ENCODE measurements at regions of chr7 and their contacts with region 1.

Region 1: GRCh38 chr7:134140889-134141867 is 14.0 kb downstream of the LRGUK start:
- DNase-seq: peak; percentile 72
- ATAC-seq: peak; percentile 97
- H3K4me3 ChIP-seq: no peak overlapping the region
- H3K27ac ChIP-seq: no peak overlapping the region
- H3K4me1 ChIP-seq: no peaks in the 10 kb centered on the region
- H3K27me3 ChIP-seq: no peaks in the 10 kb centered on the region
- CTCF ChIP-seq: peak; percentile 90

Region 2: DNA sequence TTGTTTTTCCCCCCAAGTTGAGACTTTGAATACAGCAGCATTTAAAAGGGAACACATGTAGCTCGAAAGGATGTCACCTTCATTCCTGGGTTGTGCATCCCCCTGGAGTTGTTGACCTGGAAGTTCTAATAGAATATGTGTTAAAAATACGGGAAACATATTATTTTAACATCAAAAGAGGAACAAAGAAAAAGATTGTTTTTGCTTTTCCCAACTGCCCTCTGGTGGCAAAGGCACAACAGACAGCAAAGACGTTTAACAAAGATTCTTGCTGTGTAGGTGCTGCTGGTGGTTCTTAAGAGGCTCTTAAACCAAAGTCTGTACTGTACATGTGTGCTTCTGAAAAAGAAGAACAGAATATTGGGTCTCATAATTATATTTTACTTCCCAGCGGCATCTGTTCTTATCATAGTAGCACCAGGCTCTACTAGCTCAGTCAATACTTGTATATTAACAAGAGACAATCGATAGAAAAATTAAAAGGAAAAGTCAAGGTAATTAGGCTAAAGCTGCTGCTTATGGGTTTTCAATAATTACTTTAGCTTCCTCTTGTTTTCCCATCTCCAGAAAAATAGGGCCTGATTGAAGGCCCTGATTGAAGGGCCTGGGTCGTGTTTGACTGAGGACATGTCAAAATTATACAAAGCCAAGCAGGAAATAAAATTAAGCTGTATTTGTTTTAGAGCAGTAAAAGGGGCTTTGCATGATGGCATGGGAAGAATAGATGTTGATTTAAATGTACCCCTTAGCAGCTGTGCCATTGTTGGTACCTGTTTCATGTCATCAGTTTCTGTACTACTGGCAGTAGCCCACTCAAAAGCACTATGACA is 398.3 kb before region 1 on chr7:
- CTCF ChIA-PET with region 1: no interaction called
- POLR2A ChIA-PET with region 1: no interaction called
- intact Hi-C with region 1: loop called (anchors 10 kb)
- DNase-seq: peak; percentile 42
- ATAC-seq: peak; percentile 44; the same call in 1 of the 2 replicates
- H3K4me3 ChIP-seq: no peak overlapping the region
- H3K27ac ChIP-seq: no peak overlapping the region
- H3K4me1 ChIP-seq: peaks cover 5% of the 10 kb centered on the region; the same call in 1 of the 2 replicates
- H3K27me3 ChIP-seq: no peaks in the 10 kb centered on the region
- CTCF ChIP-seq: peak; percentile 77

Region 3: GRCh38 chr7:134022286-134022911 is 118.8 kb before region 1 on chr7:
- CTCF ChIA-PET with region 1: interaction called, 10 read pairs
- POLR2A ChIA-PET with region 1: no interaction called
- intact Hi-C with region 1: loop called (anchors 2 kb)
- DNase-seq: peak; percentile 27
- ATAC-seq: peak; percentile 99
- H3K4me3 ChIP-seq: no peak overlapping the region
- H3K27ac ChIP-seq: no peak overlapping the region
- H3K4me1 ChIP-seq: no peaks in the 10 kb centered on the region
- H3K27me3 ChIP-seq: no peaks in the 10 kb centered on the region
- CTCF ChIP-seq: no peak

Region 4: DNA sequence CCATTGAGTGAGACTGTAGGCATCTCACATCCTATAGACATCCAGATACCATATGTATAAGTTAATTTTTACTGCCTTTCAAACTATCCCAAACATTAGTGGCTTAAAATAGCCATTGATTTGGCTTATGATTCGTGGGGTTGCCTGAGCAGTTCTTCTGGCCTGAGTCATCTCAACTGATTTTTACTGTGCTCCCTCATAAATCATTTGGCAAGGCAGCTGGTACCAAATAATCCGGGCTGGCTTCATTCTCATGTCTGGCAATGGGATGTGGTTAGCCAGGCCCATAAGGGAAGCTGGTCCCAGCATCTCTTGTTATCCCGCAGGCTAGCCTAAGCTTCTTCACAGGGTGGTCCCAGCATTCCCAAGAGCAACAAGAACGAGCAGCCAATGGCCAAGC is 20.8 kb before region 1 on chr7:
- CTCF ChIA-PET with region 1: no interaction called
- POLR2A ChIA-PET with region 1: no interaction called
- intact Hi-C with region 1: no loop called
- DNase-seq: no peak
- ATAC-seq: no peak
- H3K4me3 ChIP-seq: no peak overlapping the region
- H3K27ac ChIP-seq: no peak overlapping the region
- H3K4me1 ChIP-seq: no peaks in the 10 kb centered on the region
- H3K27me3 ChIP-seq: 0 out of 2 replicates have a peak, but pooled peaks cover 11% of the 10 kb centered on the region
- CTCF ChIP-seq: no peak

Region 5: GRCh38 chr7:134165252-134165651 is 24.1 kb after region 1 on chr7:
- CTCF ChIA-PET with region 1: interaction called, 15 read pairs
- POLR2A ChIA-PET with region 1: no interaction called
- intact Hi-C with region 1: no loop called
- DNase-seq: no peak
- ATAC-seq: no peak
- H3K4me3 ChIP-seq: no peak overlapping the region
- H3K27ac ChIP-seq: no peak overlapping the region
- H3K4me1 ChIP-seq: no peaks in the 10 kb centered on the region
- H3K27me3 ChIP-seq: no peaks in the 10 kb centered on the region
- CTCF ChIP-seq: no peak

Region 6: GRCh38 chr7:134420424-134421125 is 279.4 kb after region 1 on chr7:
- CTCF ChIA-PET with region 1: interaction called, 20 read pairs
- POLR2A ChIA-PET with region 1: no interaction called
- intact Hi-C with region 1: loop called (anchors 1 kb)
- DNase-seq: peak; percentile 79
- ATAC-seq: peak; percentile 84
- H3K4me3 ChIP-seq: no peak overlapping the region
- H3K27ac ChIP-seq: peak overlapping the region; percentile 18; the same call in 1 of the 2 replicates
- H3K4me1 ChIP-seq: peaks cover 32% of the 10 kb centered on the region
- H3K27me3 ChIP-seq: no peaks in the 10 kb centered on the region
- CTCF ChIP-seq: peak; percentile 90

Measured in PC-3 (cell line).